Caco-2 (cell line): ENCODE measurements at regions of chr5 and their contacts with region 1.

Region 1: GRCh38 chr5:151164686-151165392 is 7.3 kb upstream of the ANXA6 start:
- DNase-seq: peak; percentile 74 to 85
- H3K4me3 ChIP-seq: no peak overlapping the region
- H3K4me3 Mint-ChIP-seq: no peak overlapping the region
- H3K27ac Mint-ChIP-seq: no peak overlapping the region
- H3K4me1 ChIP-seq: no peaks in the 10 kb centered on the region
- H3K4me1 Mint-ChIP-seq: no peaks in the 10 kb centered on the region
- H3K27me3 ChIP-seq: no peaks in the 10 kb centered on the region
- H3K27me3 Mint-ChIP-seq: no peaks in the 10 kb centered on the region
- CTCF ChIP-seq: peak; percentile 67 to 92

Region 2: GRCh38 chr5:150398722-150399523 is 765.9 kb before region 1 on chr5:
- CTCF ChIA-PET with region 1: no interaction called
- POLR2A ChIA-PET with region 1: no interaction called
- intact Hi-C with region 1: no loop called
- DNase-seq: peak in 1 of 2 experiments; percentile 30
- H3K4me3 ChIP-seq: no peak overlapping the region
- H3K4me3 Mint-ChIP-seq: no peak overlapping the region
- H3K27ac Mint-ChIP-seq: no peak overlapping the region
- H3K4me1 ChIP-seq: no peaks in the 10 kb centered on the region
- H3K4me1 Mint-ChIP-seq: no peaks in the 10 kb centered on the region
- H3K27me3 ChIP-seq: no peaks in the 10 kb centered on the region
- H3K27me3 Mint-ChIP-seq: no peaks in the 10 kb centered on the region
- CTCF ChIP-seq: peak; percentile 18 to 22

Region 3: DNA sequence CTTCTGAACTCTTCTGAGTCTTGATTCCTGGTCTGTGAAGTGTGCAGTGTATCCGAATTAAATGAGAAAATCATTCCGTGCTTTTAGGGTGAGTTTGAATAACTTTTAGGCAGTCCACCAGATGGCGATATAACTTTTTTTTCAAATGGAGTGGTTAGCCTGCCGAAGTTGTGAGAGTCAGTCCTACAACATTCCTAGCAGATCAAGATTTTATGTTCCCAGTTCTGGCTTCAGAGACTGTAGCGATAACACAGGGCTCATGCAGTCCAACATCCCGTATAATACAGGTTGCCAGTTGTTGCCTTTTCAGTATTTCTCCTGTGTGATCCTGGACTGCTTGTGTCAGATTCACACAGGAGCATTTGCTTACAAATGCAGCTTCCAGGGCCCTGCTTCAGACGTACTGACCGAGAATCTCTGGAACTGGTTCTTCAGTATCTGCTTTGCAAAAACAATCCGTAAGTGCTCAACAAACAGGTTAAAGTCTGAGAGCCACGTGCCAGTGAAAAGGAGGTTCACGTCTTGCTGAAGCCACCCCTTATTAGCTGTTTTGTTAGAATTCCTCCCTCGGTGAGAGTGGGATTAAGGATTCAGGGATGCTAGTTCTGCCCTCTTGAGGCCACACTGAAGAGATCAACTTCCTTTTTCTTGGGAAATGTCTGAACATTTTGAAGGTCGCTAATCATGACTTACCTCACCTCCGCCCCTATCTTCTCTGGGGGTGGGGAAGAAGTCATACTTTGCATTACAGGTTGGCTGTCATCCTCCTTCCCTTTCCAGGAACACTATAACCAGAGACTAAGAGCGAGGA is 363.5 kb before region 1 on chr5:
- CTCF ChIA-PET with region 1: no interaction called
- POLR2A ChIA-PET with region 1: no interaction called
- intact Hi-C with region 1: loop called (anchors 10 kb)
- DNase-seq: peak in 1 of 2 experiments; percentile 76
- H3K4me3 ChIP-seq: peak overlapping the region; percentile 28
- H3K4me3 Mint-ChIP-seq: peak overlapping the region; percentile 76
- H3K27ac Mint-ChIP-seq: peak overlapping the region; percentile 69
- H3K4me1 ChIP-seq: 0 out of 2 replicates have a peak, but pooled peaks cover 6% of the 10 kb centered on the region
- H3K4me1 Mint-ChIP-seq: peaks cover 6% of the 10 kb centered on the region
- H3K27me3 ChIP-seq: no peaks in the 10 kb centered on the region
- H3K27me3 Mint-ChIP-seq: no peaks in the 10 kb centered on the region
- CTCF ChIP-seq: peak; percentile 61

Region 4: DNA sequence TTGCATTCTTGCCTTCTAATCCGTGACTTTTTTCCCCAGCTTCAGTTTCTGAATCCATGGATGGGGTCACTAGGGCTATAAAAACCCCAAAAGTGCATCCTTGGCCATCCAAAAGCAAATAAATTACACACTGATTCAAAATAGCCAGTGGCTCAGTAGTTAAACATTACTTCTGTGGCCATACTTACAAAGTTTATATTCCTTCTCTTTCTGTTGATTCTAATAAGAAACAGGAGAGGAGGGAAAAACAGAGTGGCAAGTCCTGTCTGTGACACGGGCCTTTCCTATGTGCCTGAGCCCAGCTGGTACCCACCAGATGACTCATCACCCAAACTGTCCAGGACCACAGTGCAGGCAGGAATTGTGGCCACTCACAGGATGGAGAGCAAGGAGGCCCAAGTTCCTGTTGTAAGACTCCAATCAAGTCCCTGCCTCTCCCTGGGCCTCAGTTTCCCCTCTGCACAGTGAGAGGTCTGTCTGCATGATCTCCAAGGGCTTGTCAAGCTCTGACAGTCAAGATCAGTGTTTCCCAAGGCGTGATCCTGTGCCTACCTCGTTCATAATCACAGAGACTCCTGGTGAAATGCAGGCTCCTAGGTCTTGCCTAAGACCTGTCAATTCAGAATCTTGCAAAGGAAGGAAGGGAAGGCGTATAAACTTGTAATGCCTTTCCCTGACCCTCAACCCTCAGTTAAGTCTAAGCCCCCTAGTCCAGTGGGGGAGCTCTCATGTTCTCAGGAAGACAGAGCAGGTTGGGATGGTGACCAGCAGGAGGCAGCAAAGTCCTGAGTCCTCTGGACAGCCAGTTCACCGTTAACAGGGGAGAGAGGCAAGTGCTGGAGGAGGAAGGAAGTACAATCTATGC is 113.5 kb before region 1 on chr5:
- CTCF ChIA-PET with region 1: interaction called, 16 read pairs
- POLR2A ChIA-PET with region 1: no interaction called
- intact Hi-C with region 1: loop called (anchors 1 kb)
- DNase-seq: peak; percentile 72 to 78
- H3K4me3 ChIP-seq: no peak overlapping the region
- H3K4me3 Mint-ChIP-seq: no peak overlapping the region
- H3K27ac Mint-ChIP-seq: peak overlapping the region; percentile 53
- H3K4me1 ChIP-seq: peaks cover 6% of the 10 kb centered on the region; the same call in 1 of the 2 replicates
- H3K4me1 Mint-ChIP-seq: peaks cover 10% of the 10 kb centered on the region
- H3K27me3 ChIP-seq: no peaks in the 10 kb centered on the region
- H3K27me3 Mint-ChIP-seq: no peaks in the 10 kb centered on the region
- CTCF ChIP-seq: peak; percentile 81 to 89

Region 5: GRCh38 chr5:151115274-151115905 is 49.4 kb before region 1 on chr5:
- CTCF ChIA-PET with region 1: interaction called, 15 read pairs
- POLR2A ChIA-PET with region 1: no interaction called
- intact Hi-C with region 1: no loop called
- DNase-seq: peak; percentile 74 to 83
- H3K4me3 ChIP-seq: no peak overlapping the region
- H3K4me3 Mint-ChIP-seq: no peak overlapping the region
- H3K27ac Mint-ChIP-seq: no peak overlapping the region
- H3K4me1 ChIP-seq: no peaks in the 10 kb centered on the region
- H3K4me1 Mint-ChIP-seq: peaks cover 7% of the 10 kb centered on the region
- H3K27me3 ChIP-seq: no peaks in the 10 kb centered on the region
- H3K27me3 Mint-ChIP-seq: no peaks in the 10 kb centered on the region
- CTCF ChIP-seq: peak; percentile 93 to 94

Region 6: GRCh38 chr5:151239237-151239861 is 74.5 kb after region 1 on chr5:
- CTCF ChIA-PET with region 1: interaction called, 6 read pairs
- POLR2A ChIA-PET with region 1: no interaction called
- intact Hi-C with region 1: loop called (anchors 1 kb)
- DNase-seq: peak; percentile 70 to 74
- H3K4me3 ChIP-seq: no peak overlapping the region
- H3K4me3 Mint-ChIP-seq: no peak overlapping the region
- H3K27ac Mint-ChIP-seq: no peak overlapping the region
- H3K4me1 ChIP-seq: peaks cover 9% of the 10 kb centered on the region
- H3K4me1 Mint-ChIP-seq: peaks cover 9% of the 10 kb centered on the region
- H3K27me3 ChIP-seq: no peaks in the 10 kb centered on the region
- H3K27me3 Mint-ChIP-seq: no peaks in the 10 kb centered on the region
- CTCF ChIP-seq: peak; percentile 87 to 92

Region 7: GRCh38 chr5:151298063-151298855 is 133.4 kb after region 1 on chr5:
- CTCF ChIA-PET with region 1: no interaction called
- POLR2A ChIA-PET with region 1: no interaction called
- intact Hi-C with region 1: loop called (anchors 2 kb)
- DNase-seq: peak; percentile 68 to 75
- H3K4me3 ChIP-seq: no peak overlapping the region
- H3K4me3 Mint-ChIP-seq: no peak overlapping the region
- H3K27ac Mint-ChIP-seq: no peak overlapping the region
- H3K4me1 ChIP-seq: peaks cover 3% of the 10 kb centered on the region; the same call in 1 of the 2 replicates
- H3K4me1 Mint-ChIP-seq: no peaks in the 10 kb centered on the region
- H3K27me3 ChIP-seq: peaks cover 2% of the 10 kb centered on the region; the same call in 1 of the 2 replicates
- H3K27me3 Mint-ChIP-seq: peaks cover 9% of the 10 kb centered on the region
- CTCF ChIP-seq: peak; percentile 64 to 74